ENCODE measurements at regions of chr4 and their contacts with region 1.

Region 1: DNA sequence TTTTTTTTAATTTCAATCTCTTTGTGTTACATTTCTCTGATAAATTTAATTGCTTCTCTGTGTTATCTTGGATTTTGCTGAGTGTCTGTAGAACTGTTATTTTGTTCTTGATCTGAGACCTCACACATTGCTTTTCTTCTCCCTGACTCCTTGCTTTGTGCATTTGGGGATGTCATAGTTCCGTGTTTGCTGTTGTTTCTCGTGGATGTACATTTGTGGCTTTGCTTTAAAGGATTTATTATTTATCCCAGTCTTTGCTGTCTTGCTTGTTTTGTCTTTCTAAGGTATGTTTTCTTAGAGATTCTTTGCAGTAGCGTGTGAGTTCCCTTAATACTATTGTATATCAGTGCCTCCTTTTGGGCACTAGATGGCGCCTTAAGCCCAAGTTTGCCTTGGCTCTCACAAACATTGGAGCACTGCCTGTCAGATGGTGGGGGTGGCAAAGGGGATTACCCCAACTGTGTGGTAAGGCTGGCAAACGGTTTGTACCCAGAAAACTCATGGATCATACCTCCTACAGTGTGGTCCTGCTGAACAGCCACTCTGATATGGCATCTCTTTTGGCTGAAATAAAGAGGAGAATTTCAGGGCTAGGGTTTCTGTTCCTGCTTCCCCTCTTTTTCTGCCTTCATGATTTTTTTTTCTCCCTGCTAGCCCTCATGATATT is 96.4 kb downstream of the PGRMC2 start:
- DNase-seq: peak; percentile 37
- ATAC-seq: peak; percentile 97
- H3K4me3 ChIP-seq: no peak overlapping the region
- H3K27ac ChIP-seq: no peak overlapping the region
- H3K4me1 ChIP-seq: no peaks in the 10 kb centered on the region
- H3K27me3 ChIP-seq: no peaks in the 10 kb centered on the region
- CTCF ChIP-seq: peak; percentile 69 to 94 (median 84)
- POLR2A ChIP-seq: no peak
- RAD21 ChIP-seq: peak; percentile 85

Region 2: GRCh38 chr4:128163177-128164117 is 27.8 kb before region 1 on chr4:
- CTCF ChIA-PET with region 1: no interaction called
- POLR2A ChIA-PET with region 1: no interaction called
- RAD21 ChIA-PET with region 1: no interaction called
- intact Hi-C with region 1: no loop called
- DNase-seq: peak; percentile 69
- ATAC-seq: peak; percentile 83
- H3K4me3 ChIP-seq: peak overlapping the region in 1 of 2 experiments; percentile 18; a peak in 1 of 4 replicates
- H3K27ac ChIP-seq: peak overlapping the region; percentile 78
- H3K4me1 ChIP-seq: peaks cover 29 to 36% of the 10 kb centered on the region in 2 experiments
- H3K27me3 ChIP-seq: no peaks in the 10 kb centered on the region
- CTCF ChIP-seq: no peak
- POLR2A ChIP-seq: no peak
- RAD21 ChIP-seq: no peak

Region 3: DNA sequence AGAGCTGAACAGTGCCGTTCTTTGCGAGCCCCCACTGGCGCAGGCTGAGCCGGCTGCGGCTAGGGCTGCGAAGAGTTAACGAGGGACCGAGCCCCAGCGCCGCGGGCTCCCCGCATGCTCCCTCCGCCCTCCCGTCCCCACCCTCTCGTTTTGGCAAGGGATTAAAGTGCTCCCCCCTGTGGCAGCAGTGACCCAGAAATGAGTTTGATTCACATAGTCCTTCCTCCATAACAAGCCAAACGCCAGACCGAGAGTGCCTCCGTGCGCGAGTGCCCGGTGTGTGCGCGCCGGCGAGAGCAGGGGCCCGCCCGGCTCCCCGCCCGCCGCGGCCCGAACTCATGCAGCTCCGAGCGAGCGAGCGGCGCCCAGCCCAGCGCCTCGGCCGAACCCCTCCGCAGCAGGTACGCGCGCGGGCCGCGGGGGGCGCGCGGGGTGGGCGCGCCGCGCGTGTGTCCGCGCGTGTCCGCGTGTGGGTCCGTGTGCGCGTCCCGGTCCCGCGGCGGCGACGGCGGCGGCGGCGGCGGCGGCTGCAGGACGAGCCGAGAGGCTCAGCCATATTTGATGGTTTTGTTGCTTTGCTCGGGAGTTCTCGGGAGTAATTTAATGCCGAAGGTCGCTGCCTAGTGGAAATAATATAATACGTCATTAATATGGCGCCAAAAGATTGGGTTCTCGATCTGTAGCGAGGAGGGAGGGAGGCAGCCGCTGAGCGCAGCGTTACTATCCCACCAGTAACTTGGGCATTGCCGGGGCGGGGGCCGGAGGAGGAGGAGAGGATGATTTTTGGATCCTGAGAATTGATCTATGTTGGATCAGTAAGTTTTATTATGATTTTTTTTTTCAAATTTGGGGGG is 618.5 kb after region 1 on chr4 and contains the start of gene JADE1:
- CTCF ChIA-PET with region 1: no interaction called
- POLR2A ChIA-PET with region 1: no interaction called
- RAD21 ChIA-PET with region 1: no interaction called
- intact Hi-C with region 1: loop called (anchors 10 kb)
- DNase-seq: peak; percentile 90
- ATAC-seq: peak; percentile 67
- H3K4me3 ChIP-seq: peak within 1 kb of the TSS; percentile 84 to 92
- H3K27ac ChIP-seq: peak within 1 kb of the TSS; percentile 91
- H3K4me1 ChIP-seq: peaks cover 10 to 27% of the 10 kb centered on the region in 2 experiments; a peak in 3 of 4 replicates
- H3K27me3 ChIP-seq: no peaks in the 10 kb centered on the region
- CTCF ChIP-seq: peak; percentile 49 to 89 (median 57)
- POLR2A ChIP-seq: peak; percentile 56
- RAD21 ChIP-seq: peak; percentile 81
- total RNA-seq, gene JADE1: 26.5 TPM

Measured in HCT116 (cell line).